ENCODE measurements at regions of chr3 and their contacts with region 1.

Region 1: GRCh38 chr3:98817547-98818041 is 54.5 kb downstream of the ST3GAL6 start:
- DNase-seq: peak; percentile 68
- H3K4me3 ChIP-seq: no peak overlapping the region
- H3K27ac ChIP-seq: no peak overlapping the region
- H3K4me1 ChIP-seq: peaks cover 4% of the 10 kb centered on the region
- H3K27me3 ChIP-seq: no peaks in the 10 kb centered on the region
- CTCF ChIP-seq: peak; percentile 78

Region 2: GRCh38 chr3:98039322-98040024 is 778.1 kb before region 1 on chr3:
- CTCF ChIA-PET with region 1: no interaction called
- POLR2A ChIA-PET with region 1: no interaction called
- intact Hi-C with region 1: loop called (anchors 10 kb)
- DNase-seq: peak; percentile 86
- H3K4me3 ChIP-seq: peak overlapping the region; percentile 28
- H3K27ac ChIP-seq: no peak overlapping the region
- H3K4me1 ChIP-seq: no peaks in the 10 kb centered on the region
- H3K27me3 ChIP-seq: peaks cover 27% of the 10 kb centered on the region
- CTCF ChIP-seq: peak; percentile 93

Region 3: GRCh38 chr3:98343647-98344507 is 473.7 kb before region 1 on chr3:
- CTCF ChIA-PET with region 1: no interaction called
- POLR2A ChIA-PET with region 1: no interaction called
- intact Hi-C with region 1: loop called (anchors 5 kb)
- DNase-seq: peak; percentile 72
- H3K4me3 ChIP-seq: no peak overlapping the region
- H3K27ac ChIP-seq: no peak overlapping the region
- H3K4me1 ChIP-seq: no peaks in the 10 kb centered on the region
- H3K27me3 ChIP-seq: peaks cover 29% of the 10 kb centered on the region
- CTCF ChIP-seq: peak; percentile 83

Region 4: DNA sequence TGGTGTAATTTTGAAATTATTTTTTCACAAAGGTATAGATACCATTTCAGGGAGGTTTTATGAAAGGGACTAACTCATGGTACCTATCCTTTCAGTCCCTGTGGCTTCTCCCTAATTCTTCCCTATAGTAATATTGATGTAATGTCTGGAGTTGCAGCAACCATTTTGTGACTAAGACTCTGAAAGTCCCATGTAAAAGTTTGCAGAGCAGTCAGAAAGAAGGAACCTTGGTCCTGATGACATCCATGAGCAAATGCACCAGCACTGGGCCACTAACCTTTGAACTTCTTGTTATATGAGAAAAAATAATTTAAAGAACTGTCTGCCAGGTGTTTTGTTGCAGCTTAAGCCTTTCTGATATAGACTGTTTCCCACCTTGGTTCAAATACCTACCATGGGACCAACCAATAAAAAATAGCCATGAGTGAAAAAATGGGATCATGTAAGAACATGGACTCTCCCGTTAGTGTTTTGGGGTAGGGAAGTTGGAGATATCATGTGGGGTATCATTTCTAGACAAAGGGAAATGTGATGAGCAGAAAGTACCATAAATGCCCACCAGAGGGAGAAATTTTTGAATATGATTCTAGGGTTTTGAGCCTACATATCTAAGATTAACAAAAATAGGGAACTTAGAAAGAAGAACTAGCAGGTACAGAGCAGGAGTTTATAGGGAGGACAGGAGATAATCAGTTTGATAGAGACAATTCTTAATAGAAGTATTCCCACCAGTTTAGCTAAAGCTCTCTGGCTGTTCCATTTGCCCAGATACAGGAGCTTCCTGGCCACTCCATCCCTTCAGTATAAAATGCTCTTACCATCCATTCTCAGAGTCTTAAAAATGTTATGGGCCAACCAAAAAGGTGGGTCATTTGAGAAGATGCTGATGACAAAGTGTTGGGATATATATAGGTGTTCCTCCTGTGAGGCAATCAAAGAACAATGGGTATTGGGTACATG is 220.8 kb before region 1 on chr3:
- CTCF ChIA-PET with region 1: interaction called, 9 read pairs
- POLR2A ChIA-PET with region 1: no interaction called
- intact Hi-C with region 1: loop called (anchors 1 kb)
- DNase-seq: peak; percentile 64
- H3K4me3 ChIP-seq: no peak overlapping the region
- H3K27ac ChIP-seq: no peak overlapping the region
- H3K4me1 ChIP-seq: peaks cover 5% of the 10 kb centered on the region
- H3K27me3 ChIP-seq: no peaks in the 10 kb centered on the region
- CTCF ChIP-seq: peak; percentile 66

Region 5: DNA sequence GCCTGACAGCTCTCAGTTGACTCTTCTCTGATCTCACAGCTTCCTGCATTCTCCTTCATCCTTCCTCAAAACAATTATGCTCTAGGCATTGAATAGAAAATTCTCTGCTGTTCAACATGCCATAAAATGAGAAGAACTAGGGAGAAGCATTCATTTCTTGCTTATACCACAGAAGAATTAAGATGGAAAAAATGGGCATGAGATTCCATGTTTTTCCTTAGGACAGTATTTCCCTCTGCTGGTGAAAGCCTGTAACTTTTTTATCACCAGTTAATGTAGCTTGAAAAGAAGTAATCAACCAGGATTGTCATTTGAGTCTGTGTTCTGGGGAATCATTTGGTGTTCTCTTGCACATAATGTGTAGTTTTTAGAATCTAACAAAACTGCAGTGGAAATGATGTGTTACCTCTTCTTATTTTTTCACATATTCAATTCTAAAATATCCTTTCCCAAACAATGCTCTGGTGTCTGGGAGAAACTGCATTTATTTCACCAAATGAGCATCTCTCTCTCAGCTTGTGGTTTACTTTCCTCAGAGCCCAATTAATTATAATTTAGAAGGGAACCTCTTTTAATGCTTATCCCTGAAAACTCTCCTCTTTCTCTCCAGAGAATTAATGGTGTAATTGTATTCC is 176.7 kb after region 1 on chr3:
- CTCF ChIA-PET with region 1: interaction called, 29 read pairs
- POLR2A ChIA-PET with region 1: no interaction called
- intact Hi-C with region 1: loop called (anchors 1 kb)
- DNase-seq: peak; percentile 71
- H3K4me3 ChIP-seq: no peak overlapping the region
- H3K27ac ChIP-seq: no peak overlapping the region
- H3K4me1 ChIP-seq: no peaks in the 10 kb centered on the region
- H3K27me3 ChIP-seq: no peaks in the 10 kb centered on the region
- CTCF ChIP-seq: peak; percentile 76

Region 6: DNA sequence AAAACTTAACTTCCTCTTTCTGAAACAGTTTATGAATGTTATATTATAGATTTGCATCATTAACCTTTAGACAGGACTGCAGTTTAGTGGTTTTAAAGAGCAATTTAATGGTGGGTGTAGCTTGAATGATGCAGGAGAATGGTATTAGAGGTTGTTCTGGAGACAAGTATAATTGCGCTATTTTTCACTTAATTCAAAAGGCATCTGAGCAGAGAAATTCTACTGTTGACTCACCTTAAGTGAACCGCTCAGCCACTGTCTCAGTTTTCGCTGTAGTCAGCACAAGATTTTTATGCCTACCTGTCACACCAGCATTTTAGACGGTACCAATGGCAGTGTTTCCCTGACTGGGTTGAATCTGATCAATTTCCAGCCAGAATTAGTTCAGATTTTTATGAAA is 432.7 kb after region 1 on chr3:
- CTCF ChIA-PET with region 1: no interaction called
- POLR2A ChIA-PET with region 1: no interaction called
- intact Hi-C with region 1: no loop called
- DNase-seq: no peak
- H3K4me3 ChIP-seq: no peak overlapping the region
- H3K27ac ChIP-seq: no peak overlapping the region
- H3K4me1 ChIP-seq: peaks cover 31% of the 10 kb centered on the region
- H3K27me3 ChIP-seq: no peaks in the 10 kb centered on the region
- CTCF ChIP-seq: no peak

Measured in A673 (cell line).